Calu3 (cell line): ENCODE measurements at regions of chr10 and their contacts with region 1.

Region 1: GRCh38 chr10:29998142-29998808 is 61.1 kb downstream of the JCAD start:
- DNase-seq: peak; percentile 84
- H3K4me3 Mint-ChIP-seq: no peak overlapping the region
- H3K27ac Mint-ChIP-seq: no peak overlapping the region
- H3K4me1 Mint-ChIP-seq: peaks cover 55% of the 10 kb centered on the region
- H3K27me3 Mint-ChIP-seq: no peaks in the 10 kb centered on the region
- CTCF ChIP-seq: peak; percentile 93

Region 2: GRCh38 chr10:29886299-29886698 is 112.0 kb before region 1 on chr10:
- CTCF ChIA-PET with region 1: no interaction called
- intact Hi-C with region 1: no loop called
- DNase-seq: no peak
- H3K4me3 Mint-ChIP-seq: no peak overlapping the region
- H3K27ac Mint-ChIP-seq: no peak overlapping the region
- H3K4me1 Mint-ChIP-seq: no peaks in the 10 kb centered on the region
- H3K27me3 Mint-ChIP-seq: no peaks in the 10 kb centered on the region
- CTCF ChIP-seq: no peak

Region 3: DNA sequence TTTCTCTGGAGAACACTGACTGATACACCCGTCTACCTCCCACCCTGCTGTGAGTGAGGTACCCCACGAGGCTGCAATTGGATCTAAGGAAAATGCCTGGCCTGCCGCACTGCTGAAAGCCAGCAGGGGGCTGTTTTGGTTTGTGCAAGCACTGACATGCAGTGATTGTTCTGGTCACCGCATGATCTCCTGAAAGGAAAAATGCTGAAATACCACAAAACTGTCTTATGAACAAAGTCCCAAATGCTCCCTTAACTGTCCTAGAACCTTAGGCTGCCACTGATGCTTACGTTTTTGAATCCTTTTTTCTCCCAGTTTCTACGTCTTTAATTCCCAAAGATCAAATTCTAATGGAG is 71.6 kb before region 1 on chr10:
- CTCF ChIA-PET with region 1: interaction called, 3 read pairs
- intact Hi-C with region 1: loop called (anchors 5 kb)
- DNase-seq: peak; percentile 28
- H3K4me3 Mint-ChIP-seq: no peak overlapping the region
- H3K27ac Mint-ChIP-seq: no peak overlapping the region
- H3K4me1 Mint-ChIP-seq: peaks cover 18% of the 10 kb centered on the region
- H3K27me3 Mint-ChIP-seq: no peaks in the 10 kb centered on the region
- CTCF ChIP-seq: no peak

Region 4: GRCh38 chr10:29946953-29947700 is 51.1 kb before region 1 on chr10:
- CTCF ChIA-PET with region 1: interaction called, 3 read pairs
- intact Hi-C with region 1: loop called (anchors 5 kb)
- DNase-seq: peak; percentile 41
- H3K4me3 Mint-ChIP-seq: no peak overlapping the region
- H3K27ac Mint-ChIP-seq: no peak overlapping the region
- H3K4me1 Mint-ChIP-seq: peaks cover 42% of the 10 kb centered on the region
- H3K27me3 Mint-ChIP-seq: no peaks in the 10 kb centered on the region
- CTCF ChIP-seq: no peak

Region 5: DNA sequence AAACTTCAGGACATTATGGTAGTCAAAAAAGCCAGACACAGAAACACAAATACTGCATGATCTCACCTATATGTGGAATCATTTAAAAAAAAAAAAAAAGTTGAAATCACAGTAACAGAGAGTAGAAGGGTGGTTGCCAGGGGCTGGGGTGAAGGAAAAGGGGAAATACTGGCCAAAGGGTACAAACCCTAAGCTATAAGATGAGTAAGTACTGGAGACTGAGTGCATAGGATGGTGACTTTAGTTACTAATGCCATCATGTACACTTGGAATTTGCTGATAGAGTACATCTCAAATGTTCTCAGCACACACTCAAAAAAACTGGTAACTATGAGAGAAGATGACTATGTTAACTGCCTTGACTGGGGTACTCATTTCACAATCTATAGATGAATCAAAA is 21.2 kb after region 1 on chr10:
- CTCF ChIA-PET with region 1: interaction called, 10 read pairs
- intact Hi-C with region 1: no loop called
- DNase-seq: no peak
- H3K4me3 Mint-ChIP-seq: no peak overlapping the region
- H3K27ac Mint-ChIP-seq: no peak overlapping the region
- H3K4me1 Mint-ChIP-seq: no peaks in the 10 kb centered on the region
- H3K27me3 Mint-ChIP-seq: no peaks in the 10 kb centered on the region
- CTCF ChIP-seq: no peak

Region 6: DNA sequence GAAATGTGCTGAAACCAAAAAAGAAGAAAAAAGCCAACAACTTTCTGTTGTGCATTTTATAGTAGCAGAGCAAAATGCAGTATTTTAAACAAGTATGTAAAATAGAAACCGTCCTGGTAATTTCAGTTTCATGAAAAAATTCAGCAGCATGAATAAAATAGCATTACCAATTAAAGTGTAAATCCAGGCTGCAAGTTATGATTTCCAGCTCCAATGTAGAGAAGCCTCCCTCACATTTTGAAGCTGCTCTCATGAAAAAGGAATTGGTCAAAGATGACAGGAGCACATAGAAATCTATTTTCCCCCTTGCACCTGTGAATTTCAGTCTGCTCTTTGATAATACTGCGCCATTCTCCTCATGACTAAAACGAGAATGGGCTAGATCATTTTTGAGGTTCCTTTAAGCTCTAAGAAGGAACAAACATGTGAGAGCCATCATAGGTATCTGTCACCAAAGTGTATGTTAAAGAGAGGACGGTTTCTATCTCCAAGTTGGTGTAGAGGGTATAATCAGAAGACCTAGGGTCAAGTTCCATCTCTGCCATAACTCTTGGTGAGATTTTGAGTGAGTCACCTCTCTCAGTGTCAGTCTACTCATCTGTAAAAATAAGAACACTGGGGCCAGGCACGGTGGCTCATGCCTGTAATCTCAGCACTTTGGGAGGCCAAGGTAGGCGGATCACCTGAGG is 243.3 kb after region 1 on chr10:
- CTCF ChIA-PET with region 1: interaction called, 15 read pairs
- intact Hi-C with region 1: loop called (anchors 5 kb)
- DNase-seq: no peak
- H3K4me3 Mint-ChIP-seq: no peak overlapping the region
- H3K27ac Mint-ChIP-seq: no peak overlapping the region
- H3K4me1 Mint-ChIP-seq: no peaks in the 10 kb centered on the region
- H3K27me3 Mint-ChIP-seq: no peaks in the 10 kb centered on the region
- CTCF ChIP-seq: no peak